Esophagus muscularis mucosa (tissue), 4 donors: ENCODE measurements at regions of chr10 and their contacts with region 1.

Region 1: DNA sequence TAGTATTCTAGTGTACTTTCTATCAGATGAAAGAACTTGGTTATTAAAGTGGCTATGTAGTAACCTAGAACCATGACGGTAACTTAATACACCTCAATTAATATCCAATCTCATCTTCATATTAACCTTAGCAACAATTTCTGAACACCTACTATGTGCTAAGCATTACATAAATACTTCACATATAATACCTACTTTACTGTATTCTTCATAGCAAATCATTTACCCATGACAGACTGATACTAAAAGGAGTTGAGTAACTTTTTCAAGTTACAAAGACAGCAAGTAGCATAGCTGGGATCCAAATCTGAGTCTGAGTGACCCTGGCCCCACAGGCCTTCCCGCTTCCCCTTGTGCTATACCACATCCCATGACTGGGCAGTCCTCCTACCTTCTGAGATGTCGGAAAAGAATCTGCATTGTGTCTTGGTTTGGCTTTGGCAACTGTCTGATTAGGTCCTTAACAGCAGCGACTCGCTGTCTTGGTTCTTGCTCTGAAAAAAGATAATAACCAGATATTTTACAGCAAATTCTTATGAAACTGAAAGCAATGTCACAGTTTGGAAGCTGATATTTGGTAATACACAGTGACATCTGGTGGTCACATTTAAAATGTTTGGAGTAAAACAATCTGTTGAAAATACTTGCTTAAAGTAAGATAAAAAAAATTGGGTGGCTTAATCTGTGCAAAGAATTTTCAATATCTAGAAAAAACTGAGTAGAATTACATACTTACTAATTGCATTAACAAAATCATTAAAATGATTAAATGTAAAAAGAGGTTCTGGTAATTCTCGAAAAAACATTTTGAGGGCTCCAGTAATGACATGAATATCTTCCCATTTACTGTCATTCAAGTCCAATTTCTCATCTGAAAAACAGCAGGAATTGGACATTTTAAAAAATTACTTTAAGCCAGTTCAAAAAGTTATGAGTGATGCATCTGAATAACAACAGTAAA is 120.1 kb downstream of the ARHGAP12 start:
- DNase-seq: no peak
- H3K4me3 ChIP-seq: peak overlapping the region; percentile 35 to 54 (median 42)
- H3K27ac ChIP-seq: peak overlapping the region; percentile 60 to 74 (median 66)
- H3K4me1 ChIP-seq: peaks cover 0 to 9% (median 3%) of the 10 kb centered on the region in 4 donors
- H3K27me3 ChIP-seq: no peaks in the 10 kb centered on the region
- CTCF ChIP-seq: peak; percentile 59 to 71 (median 64)
- EP300 ChIP-seq: no peak
- POLR2A ChIP-seq: no peak

Region 2: GRCh38 chr10:30727524-30727923 is 1081.0 kb before region 1 on chr10:
- intact Hi-C with region 1: loop called (anchors 5 kb)
- DNase-seq: no peak
- H3K4me3 ChIP-seq: no peak overlapping the region
- H3K27ac ChIP-seq: no peak overlapping the region
- H3K4me1 ChIP-seq: peaks cover 0 to 4% (median 0%) of the 10 kb centered on the region in 4 donors
- H3K27me3 ChIP-seq: no peaks in the 10 kb centered on the region
- CTCF ChIP-seq: no peak
- EP300 ChIP-seq: no peak
- POLR2A ChIP-seq: no peak

Region 3: GRCh38 chr10:31204090-31204489 is 604.4 kb before region 1 on chr10:
- intact Hi-C with region 1: no loop called
- DNase-seq: no peak
- H3K4me3 ChIP-seq: no peak overlapping the region
- H3K27ac ChIP-seq: no peak overlapping the region
- H3K4me1 ChIP-seq: peaks cover 7 to 9% (median 8%) of the 10 kb centered on the region in 4 donors
- H3K27me3 ChIP-seq: no peaks in the 10 kb centered on the region
- CTCF ChIP-seq: no peak
- EP300 ChIP-seq: no peak
- POLR2A ChIP-seq: no peak

Region 4: DNA sequence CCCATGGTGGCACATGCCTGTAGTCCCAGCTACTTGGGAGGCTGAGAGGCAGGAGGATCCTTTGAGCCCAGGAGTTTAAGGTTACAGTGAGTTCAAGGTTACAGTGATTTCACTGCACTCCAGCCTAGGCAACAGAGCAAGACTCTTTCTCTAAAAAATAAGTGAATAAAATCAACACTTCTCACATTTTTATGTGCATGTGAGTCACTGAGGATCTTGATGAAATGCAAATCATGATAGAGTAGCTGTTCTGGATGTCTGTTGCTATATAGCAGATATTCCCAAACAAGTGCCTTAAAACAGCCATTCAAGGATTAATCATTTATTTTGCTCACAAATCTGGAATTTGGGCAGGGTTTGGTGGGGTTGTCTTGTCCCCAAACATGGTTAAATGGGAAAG is 182.4 kb after region 1 on chr10:
- intact Hi-C with region 1: no loop called
- DNase-seq: no peak
- H3K4me3 ChIP-seq: no peak overlapping the region
- H3K27ac ChIP-seq: no peak overlapping the region
- H3K4me1 ChIP-seq: no peaks in the 10 kb centered on the region
- H3K27me3 ChIP-seq: no peaks in the 10 kb centered on the region
- CTCF ChIP-seq: no peak
- EP300 ChIP-seq: no peak
- POLR2A ChIP-seq: no peak